ENCODE measurements at regions of chr1 and their contacts with region 1.

Region 1: GRCh38 chr1:167533851-167534300 is 15.5 kb upstream of the CD247 start:
- DNase-seq: peak; percentile 28 to 62 (median 51)
- H3K4me3 ChIP-seq: no peak overlapping the region
- H3K4me3 Mint-ChIP-seq: no peak overlapping the region
- H3K27ac ChIP-seq: no peak overlapping the region
- H3K27ac Mint-ChIP-seq: no peak overlapping the region
- H3K4me1 ChIP-seq: peaks cover 0 to 8% of the 10 kb centered on the region in 2 donors
- H3K4me1 Mint-ChIP-seq: peaks cover 10% of the 10 kb centered on the region
- H3K27me3 ChIP-seq: no peaks in the 10 kb centered on the region
- H3K27me3 Mint-ChIP-seq: peaks cover 0 to 2% (median 1%) of the 10 kb centered on the region in 3 donors
- CTCF ChIP-seq: peak; percentile 95

Region 2: GRCh38 chr1:166827426-166827825 is 706.5 kb before region 1 on chr1:
- intact Hi-C with region 1: no loop called
- DNase-seq: no peak
- H3K4me3 ChIP-seq: no peak overlapping the region
- H3K4me3 Mint-ChIP-seq: no peak overlapping the region
- H3K27ac ChIP-seq: no peak overlapping the region
- H3K27ac Mint-ChIP-seq: no peak overlapping the region
- H3K4me1 ChIP-seq: no peaks in the 10 kb centered on the region
- H3K4me1 Mint-ChIP-seq: no peaks in the 10 kb centered on the region
- H3K27me3 ChIP-seq: peaks cover 0 to 2% of the 10 kb centered on the region in 2 donors
- H3K27me3 Mint-ChIP-seq: peaks cover 0 to 2% (median 0%) of the 10 kb centered on the region in 3 donors
- CTCF ChIP-seq: no peak

Region 3: DNA sequence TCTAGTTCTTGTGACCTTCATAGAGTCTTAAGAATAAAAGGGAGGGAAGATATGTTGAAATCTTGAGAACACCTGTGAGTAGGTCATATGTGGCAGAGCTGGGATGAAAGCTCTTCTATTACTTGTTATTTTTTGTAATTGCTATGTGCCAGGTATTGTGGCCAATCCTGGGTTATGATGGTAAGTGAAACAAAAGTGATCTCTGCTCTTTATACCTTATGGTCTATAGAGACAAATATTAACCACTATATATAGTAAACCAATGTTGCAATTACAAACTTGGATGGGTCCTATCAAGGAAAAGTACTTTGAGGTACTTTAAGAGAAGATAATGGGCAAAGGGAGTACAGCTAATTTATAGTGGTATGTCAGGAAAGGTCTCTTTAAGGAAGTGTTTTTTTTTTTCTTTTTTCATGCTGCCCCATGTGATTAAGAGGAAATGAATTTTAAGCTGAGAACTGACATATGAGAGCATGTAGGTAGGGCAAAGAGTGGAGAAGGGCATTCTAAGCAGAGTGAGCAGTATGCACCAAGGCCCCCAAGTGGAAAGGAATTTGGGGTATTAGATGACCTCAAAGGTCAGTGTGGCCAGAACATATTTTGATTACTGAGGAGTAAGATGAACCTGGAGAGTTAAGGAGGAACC is 269.9 kb before region 1 on chr1:
- intact Hi-C with region 1: loop called in 1 of 2 experiments (anchors 5 kb)
- DNase-seq: peak in 2 of 3 donors; percentile 12 to 25
- H3K4me3 ChIP-seq: no peak overlapping the region
- H3K4me3 Mint-ChIP-seq: no peak overlapping the region
- H3K27ac ChIP-seq: no peak overlapping the region
- H3K27ac Mint-ChIP-seq: no peak overlapping the region
- H3K4me1 ChIP-seq: peaks cover 14 to 21% of the 10 kb centered on the region in 2 donors
- H3K4me1 Mint-ChIP-seq: peaks cover 17% of the 10 kb centered on the region
- H3K27me3 ChIP-seq: no peaks in the 10 kb centered on the region
- H3K27me3 Mint-ChIP-seq: no peaks in the 10 kb centered on the region
- CTCF ChIP-seq: no peak

Region 4: DNA sequence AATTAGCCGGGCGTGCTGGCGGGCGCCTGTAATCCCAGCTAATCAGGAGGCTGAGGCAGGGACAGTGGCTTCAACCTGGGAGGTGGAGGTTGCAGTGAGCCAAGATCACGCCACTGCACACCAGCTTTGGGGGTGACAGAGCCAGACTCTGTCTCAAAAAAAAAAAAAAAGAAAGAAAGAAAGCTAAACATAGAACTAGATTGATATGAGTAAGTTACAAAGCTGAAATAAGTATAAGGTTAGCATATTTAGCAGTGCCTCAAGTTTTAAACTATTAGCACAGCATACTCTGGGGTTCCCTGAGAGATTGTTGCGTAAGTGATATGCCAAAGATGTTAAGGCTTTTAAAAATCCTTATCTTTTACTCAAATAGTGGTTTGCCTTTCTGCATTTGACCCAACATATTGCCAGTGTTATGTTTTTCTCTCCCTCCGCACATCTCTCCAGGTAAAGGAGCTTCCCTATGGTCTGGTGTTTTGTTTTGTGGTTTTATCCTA is 141.6 kb before region 1 on chr1:
- intact Hi-C with region 1: loop called in 1 of 2 experiments (anchors 10 kb)
- DNase-seq: no peak
- H3K4me3 ChIP-seq: no peak overlapping the region
- H3K4me3 Mint-ChIP-seq: no peak overlapping the region
- H3K27ac ChIP-seq: no peak overlapping the region
- H3K27ac Mint-ChIP-seq: peak overlapping the region in 1 of 7 donors; percentile 77
- H3K4me1 ChIP-seq: no peaks in the 10 kb centered on the region
- H3K4me1 Mint-ChIP-seq: peaks cover 3% of the 10 kb centered on the region
- H3K27me3 ChIP-seq: no peaks in the 10 kb centered on the region
- H3K27me3 Mint-ChIP-seq: no peaks in the 10 kb centered on the region
- CTCF ChIP-seq: no peak

Region 5: DNA sequence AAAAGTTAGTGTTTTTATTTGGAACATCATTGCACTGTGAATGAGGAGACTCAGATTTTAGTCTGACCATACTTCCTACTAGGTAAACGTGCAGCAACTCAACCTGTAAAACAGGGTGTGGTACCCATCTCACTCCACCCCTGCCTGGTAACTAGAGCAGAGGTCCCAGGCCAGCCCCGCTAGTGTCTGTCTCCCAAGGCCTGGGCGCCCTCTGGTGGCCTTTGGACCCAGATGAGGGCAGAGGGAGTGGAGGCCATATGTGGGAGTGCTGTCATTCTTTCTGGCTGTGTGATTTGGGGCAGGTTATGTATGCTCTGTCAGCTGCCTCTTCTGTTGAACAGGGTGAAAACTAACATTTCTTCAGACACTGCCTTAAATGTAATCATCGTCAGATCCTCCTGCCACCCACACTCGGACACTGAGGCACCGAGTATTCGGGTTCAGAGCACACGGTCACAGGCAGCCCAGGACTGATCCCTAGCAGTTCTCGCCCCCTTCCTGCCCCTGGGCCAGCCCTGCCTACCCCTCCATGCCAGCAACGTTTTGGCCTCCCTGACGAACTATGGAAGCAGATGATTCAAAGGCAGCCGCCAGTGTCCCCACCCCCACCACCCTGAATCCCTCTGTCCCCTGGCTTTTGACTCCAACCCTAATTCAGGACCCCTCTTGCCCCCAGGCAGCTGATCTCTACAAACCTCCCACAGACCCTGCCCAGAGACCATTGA is 91.6 kb before region 1 on chr1:
- intact Hi-C with region 1: loop called in 1 of 2 experiments (anchors 10 kb)
- DNase-seq: peak; percentile 59 to 67 (median 62)
- H3K4me3 ChIP-seq: no peak overlapping the region
- H3K4me3 Mint-ChIP-seq: peak overlapping the region in 1 of 2 donors; percentile 16
- H3K27ac ChIP-seq: no peak overlapping the region
- H3K27ac Mint-ChIP-seq: peak overlapping the region in 3 of 7 donors; percentile 6 to 42 (median 38)
- H3K4me1 ChIP-seq: peaks cover 20 to 24% of the 10 kb centered on the region in 2 donors
- H3K4me1 Mint-ChIP-seq: peaks cover 35% of the 10 kb centered on the region
- H3K27me3 ChIP-seq: peaks cover 0 to 15% of the 10 kb centered on the region in 2 donors
- H3K27me3 Mint-ChIP-seq: peaks cover 16 to 24% (median 18%) of the 10 kb centered on the region in 3 donors
- CTCF ChIP-seq: peak; percentile 93